AG04449 (cell line): ENCODE measurements at regions of chr6 and their contacts with region 1.

Region 1: GRCh38 chr6:30914076-30914853 is at the start of gene VARS2:
- DNase-seq: no peak
- H3K4me3 ChIP-seq: peak within 1 kb of the TSS; percentile 60
- CTCF ChIP-seq: peak; percentile 52

Region 2: DNA sequence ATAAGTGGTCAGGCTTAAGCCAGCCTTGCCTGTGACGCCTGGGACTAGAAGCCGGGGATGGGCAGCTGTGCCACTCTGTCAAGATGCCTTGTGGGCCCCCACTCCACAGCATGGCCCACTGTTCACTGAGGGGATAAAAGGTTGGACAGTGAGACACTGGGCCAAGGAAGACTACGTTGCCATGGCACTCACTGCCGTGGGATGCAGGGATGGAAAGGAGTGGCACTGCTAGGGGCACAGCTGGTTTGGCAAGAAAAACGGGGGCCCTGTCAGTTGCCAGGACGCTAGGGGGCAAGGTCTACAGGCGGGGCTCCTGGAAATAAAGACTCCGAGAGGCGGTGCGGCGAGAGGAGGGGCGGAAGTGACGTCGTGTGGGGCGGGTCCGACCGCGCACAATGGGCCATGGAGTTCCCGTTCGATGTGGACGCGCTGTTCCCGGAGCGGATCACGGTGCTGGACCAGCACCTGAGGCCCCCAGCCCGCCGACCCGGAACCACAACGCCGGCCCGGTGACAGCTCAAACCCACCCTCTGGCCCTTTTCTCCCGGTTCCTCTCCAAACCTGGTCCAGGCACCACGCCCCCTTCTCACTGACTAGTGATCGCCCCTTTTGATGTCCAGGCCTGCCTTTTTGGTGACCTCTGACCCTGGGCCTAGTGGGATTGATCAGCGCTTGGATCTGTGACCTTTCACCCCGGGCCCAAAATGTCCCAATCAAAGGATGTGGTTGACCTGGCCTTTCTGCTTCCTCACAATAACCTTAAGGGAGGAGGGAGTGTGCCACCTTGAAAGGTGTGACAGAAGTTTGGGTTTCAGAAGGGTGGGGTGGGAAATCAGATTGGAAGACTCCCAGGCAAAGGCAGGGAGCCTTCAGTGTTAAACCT is 287.5 kb before region 1 on chr6 and contains the start of gene ATAT1:
- CTCF ChIA-PET with region 1: no interaction called
- POLR2A ChIA-PET with region 1: no interaction called
- DNase-seq: no peak
- H3K4me3 ChIP-seq: peak within 1 kb of the TSS; percentile 82
- CTCF ChIP-seq: peak; percentile 35

Region 3: DNA sequence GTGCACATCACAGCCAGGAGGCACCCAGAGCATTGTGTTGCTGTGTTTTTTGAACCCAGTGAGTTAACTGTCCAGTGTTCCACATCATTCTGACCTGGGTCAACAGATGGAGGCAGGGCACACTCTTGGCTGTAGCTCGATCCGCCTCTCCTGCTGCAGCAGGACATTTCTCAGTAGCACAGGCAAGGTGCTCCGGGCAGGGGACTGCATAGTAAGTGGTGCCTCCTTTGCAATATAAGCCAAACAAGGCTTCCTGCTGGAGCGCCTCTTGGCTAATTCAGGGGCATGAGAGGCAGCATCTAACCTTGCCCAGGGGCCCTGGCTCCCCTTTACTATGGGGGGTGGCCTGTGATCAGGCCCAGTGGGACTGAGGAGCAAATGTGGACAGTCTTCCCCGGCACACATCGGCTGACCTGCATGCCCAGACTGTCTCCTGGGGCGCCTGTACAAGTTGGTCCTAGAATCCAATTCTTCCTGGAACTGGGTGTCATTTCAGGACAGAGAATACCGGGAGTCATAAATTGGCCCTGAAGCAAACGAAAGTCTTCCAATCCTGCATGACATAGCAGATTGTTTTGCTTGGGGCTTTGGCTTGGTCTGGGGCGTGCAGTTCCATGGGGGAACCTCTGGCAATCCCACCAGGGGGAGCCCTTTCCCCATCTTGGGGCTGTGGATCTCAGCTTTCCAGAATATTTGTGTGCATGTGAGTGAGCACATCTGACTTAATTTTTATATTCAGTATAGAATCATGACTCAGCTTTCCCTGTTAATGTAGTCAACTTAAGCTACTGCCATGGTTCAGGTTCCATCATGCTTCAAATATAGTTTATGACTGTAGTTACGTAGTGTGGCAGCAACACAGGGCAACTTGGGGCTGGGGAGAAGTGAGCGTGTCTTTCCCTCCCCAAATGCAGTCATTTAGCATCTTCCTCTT is 86.0 kb before region 1 on chr6:
- CTCF ChIA-PET with region 1: interaction called, 258 read pairs
- POLR2A ChIA-PET with region 1: interaction called, 3 read pairs
- DNase-seq: peak; percentile 70
- H3K4me3 ChIP-seq: no peak overlapping the region
- CTCF ChIP-seq: peak; percentile 90

Region 4: DNA sequence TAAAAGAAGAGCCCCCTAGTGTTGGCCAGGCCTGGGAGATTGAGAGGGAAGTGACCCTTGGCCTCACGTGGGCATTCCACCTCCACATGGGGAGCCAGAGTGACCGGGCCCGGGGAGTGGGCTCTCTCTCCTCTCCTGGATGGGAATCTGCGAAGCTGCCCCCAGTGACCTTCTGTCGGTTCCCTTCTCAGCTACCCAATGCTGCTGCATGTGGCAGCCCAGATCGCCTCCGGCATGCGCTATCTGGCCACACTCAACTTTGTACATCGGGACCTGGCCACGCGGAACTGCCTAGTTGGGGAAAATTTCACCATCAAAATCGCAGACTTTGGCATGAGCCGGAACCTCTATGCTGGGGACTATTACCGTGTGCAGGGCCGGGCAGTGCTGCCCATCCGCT is 16.4 kb before region 1 on chr6:
- CTCF ChIA-PET with region 1: interaction called, 47 read pairs
- POLR2A ChIA-PET with region 1: no interaction called
- DNase-seq: no peak
- H3K4me3 ChIP-seq: no peak overlapping the region
- CTCF ChIP-seq: no peak

Region 5: GRCh38 chr6:30942338-30943060 is 28.2 kb after region 1 on chr6:
- CTCF ChIA-PET with region 1: interaction called, 60 read pairs
- POLR2A ChIA-PET with region 1: no interaction called
- DNase-seq: peak; percentile 17
- H3K4me3 ChIP-seq: no peak overlapping the region
- CTCF ChIP-seq: peak; percentile 77

Region 6: GRCh38 chr6:31049518-31049917 is 135.3 kb after region 1 on chr6:
- CTCF ChIA-PET with region 1: interaction called, 59 read pairs
- POLR2A ChIA-PET with region 1: no interaction called
- DNase-seq: no peak
- H3K4me3 ChIP-seq: no peak overlapping the region
- CTCF ChIP-seq: no peak

Region 7: GRCh38 chr6:31114970-31115849 is 200.9 kb after region 1 on chr6:
- CTCF ChIA-PET with region 1: interaction called, 13 read pairs
- POLR2A ChIA-PET with region 1: no interaction called
- DNase-seq: no peak
- H3K4me3 ChIP-seq: peak overlapping the region; percentile 25
- CTCF ChIP-seq: peak; percentile 35